Activated CD4-positive, alpha-beta memory T cell treated with anti-CD3 and anti-CD28 coated beads for 36 hours (primary cell): ENCODE measurements at regions of chr2 and their contacts with region 1.

Region 1: GRCh38 chr2:84946204-84947009 is 24.6 kb upstream of the KCMF1 start:
- DNase-seq: peak; percentile 88
- H3K4me3 Mint-ChIP-seq: peak overlapping the region; percentile 51
- H3K27ac Mint-ChIP-seq: peak overlapping the region; percentile 93
- H3K4me1 Mint-ChIP-seq: peaks cover 44% of the 10 kb centered on the region
- H3K27me3 Mint-ChIP-seq: no peaks in the 10 kb centered on the region

Region 2: DNA sequence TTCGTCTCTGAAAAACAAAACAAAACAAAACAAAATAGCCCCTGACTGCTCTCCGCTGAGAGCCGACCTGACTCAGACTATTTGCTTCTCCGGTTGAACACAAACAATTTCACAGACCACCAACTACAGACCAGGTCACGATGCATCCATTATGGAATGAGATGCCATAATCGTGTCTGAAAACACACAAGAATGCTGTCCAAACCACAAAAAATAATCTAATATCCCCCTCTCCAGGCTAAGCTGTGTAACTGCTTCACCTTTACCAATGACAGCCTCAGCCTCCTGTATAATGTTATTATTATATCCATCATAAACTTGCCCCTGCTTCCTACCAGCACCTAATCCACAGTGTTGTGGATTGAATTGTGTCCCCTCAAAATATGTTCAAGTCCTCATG is 315.4 kb before region 1 on chr2:
- CTCF ChIA-PET with region 1: no interaction called
- POLR2A ChIA-PET with region 1: no interaction called
- intact Hi-C with region 1: no loop called
- DNase-seq: no peak
- H3K4me3 Mint-ChIP-seq: no peak overlapping the region
- H3K27ac Mint-ChIP-seq: no peak overlapping the region
- H3K4me1 Mint-ChIP-seq: peaks cover 13% of the 10 kb centered on the region
- H3K27me3 Mint-ChIP-seq: no peaks in the 10 kb centered on the region

Region 3: DNA sequence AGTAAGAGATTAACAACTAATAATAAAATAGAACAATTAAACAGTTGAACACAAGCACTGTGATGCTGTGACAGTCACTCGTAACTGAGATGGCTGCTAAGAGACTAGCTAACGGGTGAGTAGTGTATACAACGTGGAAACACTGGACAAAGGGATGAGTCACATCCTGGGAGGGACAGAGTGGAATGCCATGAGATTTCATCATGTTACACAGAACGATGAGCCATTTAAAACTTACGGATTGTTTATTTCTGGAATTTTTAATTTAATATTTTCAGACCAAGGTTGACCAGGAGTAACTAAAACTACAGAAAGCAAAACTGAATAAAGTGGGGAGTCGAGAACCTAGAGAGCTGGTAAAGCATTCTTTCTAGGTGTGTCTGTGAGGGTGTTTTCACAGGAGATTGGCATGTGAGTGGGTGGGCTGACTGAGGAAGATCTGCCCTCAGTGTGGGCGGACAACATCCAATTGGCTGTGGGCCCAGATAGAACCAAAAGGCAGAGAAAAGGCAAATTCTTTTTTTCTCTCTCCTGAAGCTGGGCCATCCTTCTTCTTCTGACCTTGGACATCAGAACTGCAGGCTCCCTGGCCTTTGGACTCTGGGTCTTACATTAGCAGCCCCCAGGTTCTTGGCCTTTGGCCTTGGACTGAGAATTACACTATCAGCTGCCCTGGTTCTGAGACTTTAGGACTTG is 26.4 kb before region 1 on chr2:
- CTCF ChIA-PET with region 1: interaction called, 181 read pairs
- POLR2A ChIA-PET with region 1: interaction called, 28 read pairs
- intact Hi-C with region 1: no loop called
- DNase-seq: peak; percentile 74
- H3K4me3 Mint-ChIP-seq: peak overlapping the region; percentile 37
- H3K27ac Mint-ChIP-seq: peak overlapping the region; percentile 82
- H3K4me1 Mint-ChIP-seq: peaks cover 39% of the 10 kb centered on the region
- H3K27me3 Mint-ChIP-seq: no peaks in the 10 kb centered on the region

Region 4: GRCh38 chr2:85011747-85012146 is 65.3 kb after region 1 on chr2:
- CTCF ChIA-PET with region 1: interaction called, 8 read pairs
- POLR2A ChIA-PET with region 1: interaction called, 3 read pairs
- intact Hi-C with region 1: loop called (anchors 1 kb)
- DNase-seq: no peak
- H3K4me3 Mint-ChIP-seq: no peak overlapping the region
- H3K27ac Mint-ChIP-seq: peak overlapping the region; percentile 73
- H3K4me1 Mint-ChIP-seq: peaks cover 83% of the 10 kb centered on the region
- H3K27me3 Mint-ChIP-seq: no peaks in the 10 kb centered on the region